ENCODE measurements at regions of chr9 and their contacts with region 1.

Region 1: DNA sequence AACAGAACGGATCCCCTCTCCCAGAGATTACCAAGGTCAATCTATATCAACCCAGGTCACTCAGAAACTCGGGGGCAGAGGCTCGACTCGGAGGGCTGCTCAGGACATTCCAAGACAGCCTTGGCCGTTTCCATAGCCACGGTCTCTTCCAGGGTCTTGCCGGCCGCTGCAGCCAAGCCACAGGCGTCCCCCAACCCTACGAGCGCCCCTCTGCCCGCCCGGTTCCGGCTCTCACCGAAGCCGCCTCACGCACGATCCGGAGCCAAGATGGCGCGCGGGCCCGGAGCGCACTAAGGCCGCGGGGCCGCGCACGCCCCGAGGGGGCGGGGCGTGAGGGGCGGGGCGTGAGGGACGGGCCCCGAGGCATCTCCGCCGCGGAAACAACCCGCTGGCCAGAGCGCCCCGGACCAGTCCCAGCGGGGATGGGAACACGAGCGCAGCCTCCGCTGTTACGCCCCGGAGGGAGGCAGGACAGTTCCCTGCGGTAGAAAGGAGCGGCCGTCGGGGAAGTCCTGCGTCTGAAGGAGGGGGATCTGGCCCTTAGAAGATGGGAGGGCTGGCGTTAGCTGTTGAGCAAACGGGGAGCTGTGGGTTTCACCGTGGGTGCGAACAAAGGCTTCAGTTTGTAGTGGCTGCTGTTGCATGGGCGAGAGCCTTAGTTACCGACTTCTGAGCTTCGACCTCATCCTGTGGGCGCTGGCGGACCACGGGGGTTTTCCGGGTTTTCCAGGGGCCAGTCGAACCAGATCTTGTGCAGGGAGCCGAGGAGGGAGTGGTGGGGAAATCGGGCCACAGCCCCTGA is at the start of gene RPP25L:
- DNase-seq: peak; percentile 94
- H3K4me3 ChIP-seq: peak within 1 kb of the TSS; percentile 49 to 81 (median 56)
- H3K27ac ChIP-seq: peak within 1 kb of the TSS; percentile 80 to 90 (median 87)
- H3K4me1 ChIP-seq: peaks cover 3 to 34% (median 26%) of the 10 kb centered on the region in 6 donors
- H3K27me3 ChIP-seq: no peaks in the 10 kb centered on the region
- CTCF ChIP-seq: no peak
- POLR2A ChIP-seq: peak in 2 of 3 donors; percentile 55 to 71
- total RNA-seq, gene RPP25L: 16.8 to 36.1 (median 21.5) TPM

Region 2: GRCh38 chr9:34458013-34458958 is 153.7 kb before region 1 on chr9 and contains the starts of genes DNAI1 and FAM219A:
- intact Hi-C with region 1: loop called (anchors 5 kb)
- DNase-seq: peak; percentile 100
- H3K4me3 ChIP-seq: peak within 1 kb of the TSS; percentile 58 to 92 (median 67)
- H3K27ac ChIP-seq: peak within 1 kb of the TSS; percentile 28 to 90 (median 75)
- H3K4me1 ChIP-seq: peaks cover 14 to 49% (median 31%) of the 10 kb centered on the region in 6 donors
- H3K27me3 ChIP-seq: peaks cover 0 to 8% (median 0%) of the 10 kb centered on the region in 7 donors
- CTCF ChIP-seq: peak in 1 of 11 experiments; percentile 47
- POLR2A ChIP-seq: peak in 2 of 3 donors; percentile 23 to 59
- total RNA-seq, gene DNAI1: not detected
- total RNA-seq, gene FAM219A: 10.4 to 26.9 (median 16.5) TPM